ENCODE measurements at regions of chr17 and their contacts with region 1.

Region 1: GRCh38 chr17:8057691-8058114 is 18.8 kb downstream of the ALOX15B start:
- DNase-seq: peak; percentile 88 to 97
- ATAC-seq: peak; percentile 67 to 93
- H3K4me3 ChIP-seq: peak overlapping the region; percentile 16; the same call in 2 of the 3 replicates
- H3K27ac ChIP-seq: no peak overlapping the region; a peak in 1 of 6 replicates
- H3K4me1 ChIP-seq: peaks cover 6% of the 10 kb centered on the region; the same call in 2 of the 3 replicates
- CTCF ChIP-seq: peak; percentile 93
- EP300 ChIP-seq: no peak
- POLR2A ChIP-seq: no peak
- RAD21 ChIP-seq: peak; percentile 90 to 94

Region 2: GRCh38 chr17:7745748-7746470 is 311.8 kb before region 1 on chr17:
- CTCF ChIA-PET with region 1: interaction called, 19 read pairs
- POLR2A ChIA-PET with region 1: no interaction called
- DNase-seq: peak; percentile 70 to 75
- ATAC-seq: peak; percentile 55 to 65; a peak in 5 of 6 replicates
- H3K4me3 ChIP-seq: no peak overlapping the region
- H3K27ac ChIP-seq: peak overlapping the region in 1 of 2 experiments; percentile 24; a peak in 3 of 6 replicates
- H3K4me1 ChIP-seq: peaks cover 12% of the 10 kb centered on the region
- CTCF ChIP-seq: peak; percentile 13; the same call in 1 of the 3 replicates
- EP300 ChIP-seq: no peak
- POLR2A ChIP-seq: no peak
- RAD21 ChIP-seq: no peak

Region 3: GRCh38 chr17:7897773-7898172 is 159.9 kb before region 1 on chr17:
- CTCF ChIA-PET with region 1: interaction called, 26 read pairs
- POLR2A ChIA-PET with region 1: no interaction called
- DNase-seq: peak; percentile 55 to 72
- ATAC-seq: peak; percentile 87 to 92
- H3K4me3 ChIP-seq: no peak overlapping the region
- H3K27ac ChIP-seq: no peak overlapping the region
- H3K4me1 ChIP-seq: no peaks in the 10 kb centered on the region
- CTCF ChIP-seq: peak; percentile 64
- EP300 ChIP-seq: no peak
- POLR2A ChIP-seq: no peak
- RAD21 ChIP-seq: peak; percentile 81 to 88

Region 4: GRCh38 chr17:7944326-7944725 is 113.4 kb before region 1 on chr17:
- CTCF ChIA-PET with region 1: interaction called, 13 read pairs
- POLR2A ChIA-PET with region 1: no interaction called
- DNase-seq: no peak
- ATAC-seq: no peak
- H3K4me3 ChIP-seq: no peak overlapping the region
- H3K27ac ChIP-seq: no peak overlapping the region
- H3K4me1 ChIP-seq: no peaks in the 10 kb centered on the region
- CTCF ChIP-seq: no peak
- EP300 ChIP-seq: no peak
- POLR2A ChIP-seq: no peak
- RAD21 ChIP-seq: no peak

Region 5: DNA sequence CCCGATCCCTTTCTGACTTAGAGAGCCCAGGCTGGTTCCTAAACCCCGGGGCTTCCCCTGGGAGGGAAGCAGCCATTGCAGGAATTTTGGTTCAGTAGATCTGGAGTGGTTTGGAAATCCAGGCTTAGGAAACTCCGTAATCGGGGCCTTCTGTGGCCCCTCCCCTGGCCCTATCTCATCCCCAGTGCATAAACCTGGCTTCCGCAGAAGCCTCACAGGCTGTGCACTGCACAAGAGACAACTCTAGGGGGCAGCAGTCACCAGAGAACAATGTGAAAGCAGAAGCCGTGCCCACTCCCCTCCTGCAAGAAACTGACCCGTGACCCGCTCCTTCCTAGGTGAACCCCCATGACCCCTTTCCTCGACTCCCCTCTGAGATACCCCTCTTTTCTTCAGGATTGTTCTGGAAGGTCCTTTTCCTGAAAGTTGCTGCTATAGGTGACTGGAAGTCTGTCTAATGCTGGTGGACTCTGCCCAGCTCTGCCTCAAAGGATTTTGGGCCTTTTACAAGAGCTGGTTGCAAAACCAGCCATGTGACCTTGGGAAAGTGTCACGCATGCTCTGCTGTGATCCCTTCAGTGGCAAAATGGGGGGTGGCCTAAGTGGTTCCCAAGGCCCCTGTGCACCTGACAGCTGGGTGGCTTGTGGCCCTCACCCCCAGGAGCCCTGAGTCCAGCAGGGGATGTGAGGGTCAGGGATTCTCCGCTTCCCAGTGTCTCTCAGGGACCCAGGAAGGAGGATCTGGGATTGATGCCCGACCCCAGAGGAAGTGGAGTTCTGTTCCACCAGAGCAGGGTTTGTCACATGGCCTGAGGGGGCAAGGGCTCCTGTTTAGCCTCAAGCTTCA is 40.8 kb before region 1 on chr17:
- CTCF ChIA-PET with region 1: interaction called, 148 read pairs
- POLR2A ChIA-PET with region 1: no interaction called
- DNase-seq: peak; percentile 62 to 66
- ATAC-seq: peak; percentile 76 to 92
- H3K4me3 ChIP-seq: peak overlapping the region; percentile 47
- H3K27ac ChIP-seq: peak overlapping the region; percentile 62 to 70; a peak in 5 of 6 replicates
- H3K4me1 ChIP-seq: peaks cover 5% of the 10 kb centered on the region; the same call in 1 of the 3 replicates
- CTCF ChIP-seq: peak; percentile 89
- EP300 ChIP-seq: no peak
- POLR2A ChIP-seq: no peak
- RAD21 ChIP-seq: peak; percentile 72 to 77

Region 6: DNA sequence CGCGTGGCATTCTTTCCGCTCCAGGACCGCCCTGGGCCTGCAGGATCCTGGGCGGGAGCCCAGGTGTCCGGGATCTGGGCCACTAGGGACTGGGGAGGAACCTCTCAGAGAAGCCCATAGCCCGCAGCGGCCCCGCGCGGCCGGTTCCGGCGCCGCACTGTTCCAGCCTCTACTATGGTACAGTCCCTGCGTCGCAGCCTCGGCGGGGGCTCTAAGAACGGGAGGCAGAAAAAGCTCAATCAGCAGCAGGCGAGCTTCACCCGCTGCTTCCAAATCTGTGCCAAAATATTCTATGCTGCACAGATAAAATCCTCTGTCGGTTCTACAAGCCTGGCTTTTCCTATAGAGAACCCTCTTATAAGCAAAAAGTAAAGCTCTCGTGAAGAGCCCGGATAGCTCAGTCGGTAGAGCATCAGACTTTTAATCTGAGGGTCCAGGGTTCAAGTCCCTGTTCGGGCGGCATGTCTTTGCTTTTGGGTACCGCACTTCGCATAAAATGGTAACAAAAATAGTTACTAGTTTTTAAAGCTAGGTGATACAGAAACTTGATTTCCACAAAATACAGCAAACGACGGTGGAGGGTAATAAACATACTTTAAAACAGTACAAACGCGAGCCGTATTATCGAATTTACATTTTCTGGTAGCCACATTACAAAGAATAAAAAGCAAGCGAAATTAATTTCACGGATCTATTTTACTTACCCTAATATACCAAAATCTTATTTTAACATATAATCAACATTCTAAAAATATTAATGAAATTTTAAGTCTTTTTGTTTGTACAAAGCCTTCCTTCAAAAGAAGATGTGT is 61.3 kb after region 1 on chr17:
- CTCF ChIA-PET with region 1: interaction called, 114 read pairs
- POLR2A ChIA-PET with region 1: no interaction called
- DNase-seq: peak; percentile 87 to 90
- ATAC-seq: peak; percentile 33 to 71
- H3K4me3 ChIP-seq: peak overlapping the region; percentile 51
- H3K27ac ChIP-seq: peak overlapping the region; percentile 67 to 90
- H3K4me1 ChIP-seq: peaks cover 13% of the 10 kb centered on the region
- CTCF ChIP-seq: peak; percentile 97
- EP300 ChIP-seq: no peak
- POLR2A ChIP-seq: no peak
- RAD21 ChIP-seq: peak; percentile 58 to 75

Region 7: DNA sequence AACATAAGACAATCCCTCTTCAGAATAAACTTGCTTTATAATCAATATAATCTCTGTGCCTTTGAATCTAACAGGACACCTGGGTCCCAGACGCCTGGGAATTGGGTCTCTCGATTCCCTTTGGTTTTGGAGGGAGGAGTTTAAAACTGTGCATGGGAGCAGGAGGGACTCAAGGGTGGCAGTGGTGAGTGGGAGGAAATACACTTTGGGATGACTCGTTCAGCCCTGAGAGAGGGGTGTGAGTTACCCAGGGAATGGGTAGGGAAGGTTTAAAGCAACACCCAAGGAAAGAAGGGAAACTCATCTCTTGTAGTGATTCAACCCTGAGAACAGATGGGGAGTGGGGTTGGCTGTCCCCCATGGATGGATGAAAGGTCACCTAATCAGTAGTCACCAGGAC is 232.3 kb after region 1 on chr17:
- CTCF ChIA-PET with region 1: no interaction called
- POLR2A ChIA-PET with region 1: no interaction called
- DNase-seq: no peak
- ATAC-seq: no peak
- H3K4me3 ChIP-seq: no peak overlapping the region
- H3K27ac ChIP-seq: no peak overlapping the region
- H3K4me1 ChIP-seq: peaks cover 30% of the 10 kb centered on the region
- CTCF ChIP-seq: no peak
- EP300 ChIP-seq: no peak
- POLR2A ChIP-seq: no peak
- RAD21 ChIP-seq: no peak